Left colon (tissue), 2 donors: ENCODE measurements at regions of chr12 and their contacts with region 1.

Region 1: DNA sequence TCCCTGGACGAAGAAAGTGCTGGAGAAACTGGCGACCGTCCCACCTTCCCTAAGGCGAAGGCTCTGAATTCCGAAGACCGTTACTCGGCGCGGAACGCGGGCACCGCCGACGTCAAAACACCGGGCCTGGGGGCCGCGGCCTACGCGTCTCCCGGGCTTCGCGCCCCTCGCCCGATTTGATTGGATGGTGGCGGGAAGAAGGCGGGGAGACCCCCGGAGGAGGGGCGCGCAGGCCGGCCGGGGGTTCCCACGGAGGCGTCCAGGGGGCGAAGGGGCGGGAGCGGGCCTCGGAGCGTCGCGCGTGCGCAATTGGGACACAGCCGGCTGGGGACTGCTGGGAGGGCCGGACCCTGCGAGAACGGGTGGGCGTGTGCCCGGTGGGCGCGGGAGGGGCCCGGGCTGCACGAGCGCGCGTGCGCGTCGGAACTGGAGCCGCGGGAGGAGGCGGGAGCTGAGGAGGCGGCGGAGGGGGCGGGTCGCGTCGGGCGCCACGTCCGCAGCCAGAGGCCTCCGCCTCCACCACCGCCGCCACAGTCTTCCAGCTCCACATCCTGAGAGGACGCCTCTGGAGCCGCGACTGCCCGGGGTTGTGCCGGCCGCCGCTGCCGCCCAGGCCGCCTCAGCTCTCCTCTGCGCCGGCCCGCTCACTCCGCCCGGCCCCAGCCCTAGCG is at the start of gene TMEM263:
- DNase-seq: peak; percentile 89 to 90
- ATAC-seq: peak; percentile 87
- total RNA-seq, gene TMEM263: 24.6 to 26.3 TPM

Region 2: DNA sequence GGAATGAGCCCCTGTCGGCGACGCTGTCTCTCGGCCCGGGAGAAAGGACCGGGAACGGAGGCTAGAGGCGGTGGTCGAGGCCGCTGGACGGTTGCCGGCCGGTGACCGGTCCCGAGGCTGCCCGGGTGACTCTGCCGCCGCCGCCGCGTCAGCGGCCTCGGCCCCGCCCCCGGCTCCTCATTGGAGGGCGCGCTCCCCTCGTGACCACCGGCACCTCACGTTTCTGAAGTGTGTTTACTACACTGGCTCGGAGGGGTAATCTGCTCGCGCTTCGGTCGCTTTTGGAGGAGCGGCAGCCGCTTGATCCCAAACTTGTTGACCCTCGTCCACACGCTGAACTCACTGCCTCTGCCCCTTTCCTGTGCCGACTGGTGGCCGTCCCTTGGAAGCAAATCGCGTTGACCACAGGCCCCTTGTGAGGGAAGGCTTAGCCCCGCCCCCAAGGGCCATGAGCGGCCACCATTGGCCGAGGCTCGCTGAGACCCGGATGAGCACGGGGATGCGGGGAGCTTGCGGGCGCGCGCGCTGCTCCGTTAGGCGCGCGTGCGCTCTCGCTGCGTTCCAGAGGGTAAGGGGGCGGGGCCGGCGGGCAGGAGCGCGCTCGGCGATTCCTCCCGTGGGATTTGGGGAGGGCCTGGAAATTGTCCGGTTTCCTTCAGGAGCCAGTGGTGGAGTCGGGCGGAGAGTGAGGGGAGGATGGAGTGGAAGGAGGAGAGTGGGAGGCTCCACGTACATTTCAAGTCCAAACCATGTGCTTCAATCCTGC is 138.1 kb after region 1 on chr12 and contains the start of gene CRY1:
- intact Hi-C with region 1: loop called in 1 of 2 experiments (anchors 5 kb)
- DNase-seq: peak; percentile 94 to 97
- ATAC-seq: peak; percentile 92
- total RNA-seq, gene CRY1: 11.6 to 12.2 TPM

Region 3: DNA sequence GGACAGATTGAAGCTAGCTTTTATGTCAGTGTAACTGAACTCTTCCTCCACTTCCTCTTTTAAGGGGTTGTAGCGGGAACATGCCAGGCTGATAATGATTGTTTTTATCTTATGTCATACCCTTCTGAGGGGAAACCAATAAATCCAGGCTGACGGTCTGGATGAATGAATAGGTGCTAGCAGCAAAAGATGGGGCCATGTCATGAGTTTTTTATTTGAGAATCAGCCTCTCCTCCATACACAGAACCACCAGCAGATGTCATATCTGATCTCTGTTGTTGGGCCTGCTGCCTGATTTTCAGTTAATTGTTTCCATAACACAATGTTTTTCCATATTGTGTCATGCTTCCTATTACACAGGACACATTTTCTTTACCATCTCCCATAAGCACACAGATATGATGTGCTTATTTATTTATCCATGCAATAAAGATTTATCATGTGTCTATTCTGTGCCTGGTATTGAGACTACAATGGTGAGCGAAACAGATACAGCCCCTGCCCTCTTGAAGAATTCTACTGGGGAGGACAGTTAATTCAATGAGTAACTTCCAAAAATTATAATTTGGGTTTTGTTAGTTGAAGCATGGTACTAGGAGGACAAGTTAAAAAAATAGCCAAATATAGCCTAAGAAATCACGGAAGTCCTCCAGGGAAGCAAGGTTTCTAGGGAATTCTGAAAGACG is 171.4 kb after region 1 on chr12:
- intact Hi-C with region 1: no loop called
- DNase-seq: no peak
- ATAC-seq: no peak